ENCODE measurements at regions of chr21 and their contacts with region 1.

Region 1: DNA sequence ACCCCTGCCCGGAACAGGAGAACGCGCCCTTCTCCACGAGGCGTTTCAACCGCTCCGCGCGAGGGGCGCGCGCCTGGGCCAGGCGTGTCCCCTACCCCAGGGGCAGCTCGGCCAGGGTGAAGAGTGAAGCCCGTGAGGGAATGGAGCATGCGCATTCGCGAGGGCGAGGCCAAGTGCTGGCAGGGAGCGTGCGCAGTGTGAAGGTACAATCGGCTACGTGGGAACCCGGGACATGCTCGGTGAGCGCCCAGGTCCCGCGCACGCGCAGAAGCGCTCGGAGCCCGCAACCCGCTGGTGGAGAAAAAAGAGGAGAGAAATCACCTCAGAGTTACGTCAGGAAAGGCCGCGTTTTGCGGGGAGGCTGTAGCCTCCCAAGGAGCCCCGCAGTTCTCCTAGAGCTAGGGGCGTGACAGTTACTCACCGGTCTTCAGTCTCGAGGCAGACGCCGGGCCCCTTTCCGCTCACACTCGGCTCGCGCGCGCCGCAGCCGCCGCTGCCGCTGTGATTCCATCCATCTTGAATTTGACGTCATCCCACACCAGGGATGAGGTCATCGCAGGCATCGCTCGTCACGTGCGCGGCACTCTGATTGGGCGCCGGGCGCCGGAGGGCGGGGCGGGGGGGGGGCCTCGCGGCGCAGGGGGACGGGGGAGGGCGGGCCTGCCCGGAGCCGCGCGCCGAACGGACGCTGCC is at the start of gene ZBTB21:
- DNase-seq: peak; percentile 97 to 100 (median 98)
- ATAC-seq: peak; percentile 90
- H3K4me3 ChIP-seq: peak within 1 kb of the TSS; percentile 85
- H3K27ac ChIP-seq: peak within 1 kb of the TSS; percentile 92
- H3K4me1 ChIP-seq: peaks cover 10 to 25% of the 10 kb centered on the region in 2 experiments; a peak in 4 of 5 replicates
- H3K27me3 ChIP-seq: peaks cover 17 to 18% of the 10 kb centered on the region in 2 experiments
- CTCF ChIP-seq: no peak
- EP300 ChIP-seq: no peak
- POLR2A ChIP-seq: peak; percentile 86
- RAD21 ChIP-seq: no peak
- polyA plus RNA-seq, gene ZBTB21: 2.2 to 2.6 TPM

Region 2: GRCh38 chr21:41879190-41879998 is 130.6 kb before region 1 on chr21 and contains the start of gene PRDM15:
- CTCF ChIA-PET with region 1: no interaction called
- POLR2A ChIA-PET with region 1: interaction called, 3 read pairs
- in situ Hi-C with region 1: no loop called
- intact Hi-C with region 1: loop called (anchors 10 kb)
- DNase-seq: peak; percentile 91 to 93 (median 92)
- ATAC-seq: peak; percentile 69
- H3K4me3 ChIP-seq: peak within 1 kb of the TSS; percentile 89
- H3K27ac ChIP-seq: peak within 1 kb of the TSS; percentile 96
- H3K4me1 ChIP-seq: peaks cover 20 to 27% of the 10 kb centered on the region in 2 experiments
- H3K27me3 ChIP-seq: no peaks in the 10 kb centered on the region
- CTCF ChIP-seq: no peak
- EP300 ChIP-seq: no peak
- POLR2A ChIP-seq: peak; percentile 72
- RAD21 ChIP-seq: no peak
- polyA plus RNA-seq, gene PRDM15: 0.93 to 1.0 TPM

Region 3: GRCh38 chr21:41957991-41958766 is 51.8 kb before region 1 on chr21:
- CTCF ChIA-PET with region 1: no interaction called
- POLR2A ChIA-PET with region 1: interaction called, 3 read pairs
- in situ Hi-C with region 1: no loop called
- intact Hi-C with region 1: loop called (anchors 1 kb)
- DNase-seq: peak; percentile 66 to 89 (median 75)
- ATAC-seq: peak; percentile 65
- H3K4me3 ChIP-seq: no peak overlapping the region
- H3K27ac ChIP-seq: peak overlapping the region; percentile 76
- H3K4me1 ChIP-seq: peaks cover 31 to 53% of the 10 kb centered on the region in 2 experiments
- H3K27me3 ChIP-seq: peaks cover 15 to 26% of the 10 kb centered on the region in 2 experiments
- CTCF ChIP-seq: peak; percentile 37 to 51 (median 50); a peak in 5 of 6 replicates
- EP300 ChIP-seq: peak; percentile 56; the same call in 1 of the 2 replicates
- POLR2A ChIP-seq: no peak
- RAD21 ChIP-seq: peak in 1 of 2 experiments; percentile 63; a peak in 2 of 4 replicates

Region 4: DNA sequence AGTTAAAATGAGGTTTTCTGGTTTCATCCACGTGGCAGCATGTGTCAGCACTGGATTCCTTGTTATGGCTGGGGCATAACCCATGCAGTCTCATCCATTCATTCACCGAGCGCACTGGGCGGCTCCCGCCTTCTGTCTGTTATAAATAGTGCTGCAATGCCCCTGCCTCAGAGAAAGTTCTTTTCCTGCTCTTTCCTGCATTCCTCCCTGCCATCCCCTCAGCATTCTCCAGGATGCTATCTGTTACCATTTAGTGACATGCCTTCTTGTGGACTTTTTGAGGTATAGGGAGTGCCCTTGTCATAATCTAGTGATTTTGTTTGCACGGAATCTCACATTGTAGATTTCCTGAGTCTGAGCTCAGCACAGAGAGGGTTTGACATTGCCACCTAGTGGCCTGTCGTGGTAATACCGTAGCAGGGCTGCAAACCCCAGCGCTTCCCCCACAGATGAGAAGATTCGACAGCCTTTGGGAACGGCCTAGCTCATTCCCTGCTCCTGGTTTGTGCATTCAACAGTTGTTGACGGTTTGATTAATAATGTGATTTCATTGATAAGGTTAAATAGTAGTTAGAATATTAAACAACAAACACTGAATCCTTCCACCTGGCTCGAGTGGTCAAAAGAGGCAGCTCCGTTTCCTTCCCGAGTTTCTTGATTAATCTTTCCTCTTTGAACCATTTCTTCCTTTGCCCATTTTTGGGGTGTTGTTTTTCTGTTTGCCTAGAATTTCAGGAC is 107.4 kb after region 1 on chr21:
- CTCF ChIA-PET with region 1: no interaction called
- POLR2A ChIA-PET with region 1: interaction called, 3 read pairs
- in situ Hi-C with region 1: no loop called
- intact Hi-C with region 1: loop called (anchors 5 kb)
- DNase-seq: peak; percentile 79 to 88 (median 85)
- ATAC-seq: peak; percentile 94
- H3K4me3 ChIP-seq: no peak overlapping the region
- H3K27ac ChIP-seq: no peak overlapping the region
- H3K4me1 ChIP-seq: peaks cover 0 to 4% of the 10 kb centered on the region in 2 experiments; a peak in 2 of 5 replicates
- H3K27me3 ChIP-seq: peaks cover 27 to 71% of the 10 kb centered on the region in 2 experiments; a peak in 4 of 5 replicates
- CTCF ChIP-seq: peak; percentile 87 to 93 (median 93)
- EP300 ChIP-seq: no peak
- POLR2A ChIP-seq: no peak
- RAD21 ChIP-seq: peak; percentile 75 to 90

Region 5: GRCh38 chr21:42156690-42157577 is 147.0 kb after region 1 on chr21:
- CTCF ChIA-PET with region 1: no interaction called
- POLR2A ChIA-PET with region 1: no interaction called
- in situ Hi-C with region 1: no loop called
- intact Hi-C with region 1: no loop called
- DNase-seq: no peak
- ATAC-seq: no peak; the same call in 2 of the 3 replicates
- H3K4me3 ChIP-seq: no peak overlapping the region
- H3K27ac ChIP-seq: no peak overlapping the region
- H3K4me1 ChIP-seq: no peaks in the 10 kb centered on the region
- H3K27me3 ChIP-seq: peaks cover 20 to 55% of the 10 kb centered on the region in 2 experiments; a peak in 4 of 5 replicates
- CTCF ChIP-seq: no peak
- EP300 ChIP-seq: no peak
- POLR2A ChIP-seq: no peak
- RAD21 ChIP-seq: no peak

Region 6: GRCh38 chr21:42218836-42219359 is 208.9 kb after region 1 on chr21 and contains the start of gene ABCG1:
- CTCF ChIA-PET with region 1: no interaction called
- POLR2A ChIA-PET with region 1: no interaction called
- in situ Hi-C with region 1: no loop called
- intact Hi-C with region 1: no loop called
- DNase-seq: peak in 2 of 4 experiments; percentile 43 to 47
- ATAC-seq: no peak; the same call in 2 of the 3 replicates
- H3K4me3 ChIP-seq: no peak within 1 kb of the TSS
- H3K27ac ChIP-seq: no peak within 1 kb of the TSS
- H3K4me1 ChIP-seq: peaks cover 0 to 8% of the 10 kb centered on the region in 2 experiments; a peak in 1 of 5 replicates
- H3K27me3 ChIP-seq: peaks cover 28 to 65% of the 10 kb centered on the region in 2 experiments
- CTCF ChIP-seq: no peak
- EP300 ChIP-seq: no peak
- POLR2A ChIP-seq: no peak
- RAD21 ChIP-seq: no peak
- polyA plus RNA-seq, gene ABCG1: not detected

Region 7: GRCh38 chr21:42496122-42496900 is 486.3 kb after region 1 on chr21 and contains the start of gene RSPH1:
- CTCF ChIA-PET with region 1: no interaction called
- POLR2A ChIA-PET with region 1: no interaction called
- in situ Hi-C with region 1: no loop called
- intact Hi-C with region 1: loop called (anchors 5 kb)
- DNase-seq: peak; percentile 99 to 100 (median 100)
- ATAC-seq: peak; percentile 100
- H3K4me3 ChIP-seq: peak within 1 kb of the TSS; percentile 44
- H3K27ac ChIP-seq: no peak within 1 kb of the TSS
- H3K4me1 ChIP-seq: peaks cover 15 to 16% of the 10 kb centered on the region in 2 experiments; a peak in 4 of 5 replicates
- H3K27me3 ChIP-seq: peaks cover 23 to 31% of the 10 kb centered on the region in 2 experiments
- CTCF ChIP-seq: peak in 1 of 3 experiments; percentile 1; a peak in 1 of 6 replicates
- EP300 ChIP-seq: no peak
- POLR2A ChIP-seq: no peak
- RAD21 ChIP-seq: no peak
- polyA plus RNA-seq, gene RSPH1: not detected

Region 8: DNA sequence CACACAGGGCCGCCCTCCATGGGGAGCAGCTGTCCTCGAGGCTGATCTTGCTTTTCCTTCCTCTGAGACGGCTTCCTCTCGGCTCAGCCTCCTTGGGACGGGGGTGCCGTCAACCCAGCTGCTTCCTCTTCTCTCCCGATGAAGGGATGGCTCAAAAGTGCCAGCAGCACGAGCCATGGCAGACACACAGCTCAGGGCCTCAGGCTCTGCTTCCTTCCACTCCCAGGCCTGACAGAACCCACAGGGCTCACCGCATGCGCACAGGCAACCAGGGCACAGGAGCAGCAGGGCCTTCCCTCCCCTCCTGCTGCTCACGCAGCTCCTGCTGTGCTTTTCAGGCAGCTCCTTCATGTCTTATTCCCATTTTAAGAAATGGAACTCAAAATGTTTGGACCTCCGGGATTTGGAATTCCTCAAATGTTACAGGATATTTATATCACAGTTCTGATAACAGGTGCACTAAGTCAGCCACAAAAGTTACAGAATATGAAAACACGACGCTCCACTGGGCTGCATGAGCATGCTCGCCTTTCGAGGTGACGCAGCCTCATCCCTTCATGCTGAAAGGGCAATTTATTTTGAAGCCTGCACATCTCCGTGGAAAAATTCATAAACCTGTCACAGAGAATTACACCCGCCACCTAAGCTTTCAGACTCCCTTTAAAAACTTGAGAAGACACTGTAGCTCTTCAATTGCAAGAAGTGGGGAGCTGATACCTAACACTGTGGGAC is 1564.9 kb after region 1 on chr21:
- CTCF ChIA-PET with region 1: no interaction called
- POLR2A ChIA-PET with region 1: no interaction called
- in situ Hi-C with region 1: no loop called
- intact Hi-C with region 1: no loop called
- DNase-seq: no peak
- ATAC-seq: no peak
- H3K4me3 ChIP-seq: no peak overlapping the region
- H3K27ac ChIP-seq: no peak overlapping the region
- H3K4me1 ChIP-seq: peaks cover 0 to 4% of the 10 kb centered on the region in 2 experiments; a peak in 1 of 5 replicates
- H3K27me3 ChIP-seq: peaks cover 47 to 61% of the 10 kb centered on the region in 2 experiments
- CTCF ChIP-seq: no peak
- EP300 ChIP-seq: no peak
- POLR2A ChIP-seq: no peak
- RAD21 ChIP-seq: no peak

Measured in K562 (cell line).